Mammary epithelial cell (primary cell): ENCODE measurements at regions of chr5 and their contacts with region 1.

Region 1: DNA sequence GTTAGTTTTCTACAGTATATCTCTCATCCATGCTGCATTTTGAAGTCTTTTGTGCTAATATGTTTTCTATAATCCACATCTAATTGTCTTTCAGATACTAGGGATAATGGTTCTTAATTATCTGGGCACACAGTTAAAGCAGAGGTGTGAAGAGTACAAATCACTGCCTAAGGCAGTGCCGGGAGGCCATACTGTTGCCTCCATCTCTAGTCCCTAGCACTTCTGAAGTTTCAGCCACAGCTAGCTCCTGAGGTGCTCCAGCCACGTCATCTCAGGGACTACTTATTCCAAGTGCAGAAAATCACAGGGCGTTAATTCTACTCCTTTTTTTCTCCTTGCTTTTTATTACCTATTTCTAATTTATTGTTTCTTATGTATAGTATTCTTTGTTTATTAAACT is 760.0 kb upstream of the FAM174A start:
- DNase-seq: no peak
- H3K4me3 ChIP-seq: no peak overlapping the region
- H3K27ac ChIP-seq: no peak overlapping the region
- H3K4me1 ChIP-seq: peaks cover 3% of the 10 kb centered on the region
- H3K27me3 ChIP-seq: no peaks in the 10 kb centered on the region
- CTCF ChIP-seq: no peak

Region 2: GRCh38 chr5:99807346-99807745 is 32.2 kb after region 1 on chr5:
- CTCF ChIA-PET with region 1: interaction called, 10 read pairs
- dilution Hi-C with region 1: no loop called
- in situ Hi-C with region 1: no loop called
- intact Hi-C with region 1: no loop called
- DNase-seq: no peak
- H3K4me3 ChIP-seq: no peak overlapping the region
- H3K27ac ChIP-seq: no peak overlapping the region
- H3K4me1 ChIP-seq: no peaks in the 10 kb centered on the region
- H3K27me3 ChIP-seq: no peaks in the 10 kb centered on the region
- CTCF ChIP-seq: no peak

Region 3: DNA sequence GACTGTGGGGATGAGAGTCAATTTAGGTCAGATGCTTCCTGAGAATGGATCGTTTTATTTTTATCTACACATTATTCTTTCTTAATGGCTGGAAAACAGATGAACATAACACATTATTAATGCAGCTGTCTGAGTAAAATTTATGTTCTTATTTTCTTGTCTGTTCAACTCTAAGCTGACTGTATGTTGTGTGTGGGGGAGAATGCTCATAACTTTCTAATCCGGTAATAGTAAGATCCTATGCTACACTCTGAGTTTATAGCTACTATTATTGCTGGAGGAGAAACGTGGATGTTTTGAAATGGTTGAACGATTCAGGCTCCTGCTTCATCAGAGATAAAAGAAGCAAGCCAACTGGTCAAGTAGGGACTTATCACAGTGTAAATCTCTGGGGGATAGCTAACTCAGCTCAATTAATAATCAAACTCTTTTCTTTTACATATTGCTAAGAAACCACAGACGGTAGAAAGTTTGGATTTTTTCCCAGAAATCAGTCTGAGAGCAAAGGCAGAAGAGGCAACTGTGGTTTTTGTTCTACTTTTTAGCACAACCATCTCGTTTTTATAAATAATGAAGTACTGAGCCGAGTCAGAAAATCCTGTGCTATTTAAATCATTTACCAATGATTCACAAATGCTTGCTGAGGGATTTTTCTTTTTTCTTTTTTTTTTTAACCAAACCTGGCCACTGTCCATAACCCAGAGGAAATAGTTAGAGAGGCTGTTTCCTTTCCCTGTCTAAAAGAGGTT is 495.0 kb after region 1 on chr5:
- CTCF ChIA-PET with region 1: no interaction called
- dilution Hi-C with region 1: no loop called
- in situ Hi-C with region 1: no loop called
- intact Hi-C with region 1: no loop called
- DNase-seq: no peak
- H3K4me3 ChIP-seq: no peak overlapping the region
- H3K27ac ChIP-seq: no peak overlapping the region
- H3K4me1 ChIP-seq: no peaks in the 10 kb centered on the region
- H3K27me3 ChIP-seq: no peaks in the 10 kb centered on the region
- CTCF ChIP-seq: no peak